CD14-positive monocyte (primary cell): ENCODE measurements at regions of chr11 and their contacts with region 1.

Region 1: GRCh38 chr11:102341844-102342318 is 5.1 kb upstream of the BIRC2 start:
- DNase-seq: peak; percentile 69 to 85 (median 84)
- H3K4me3 ChIP-seq: no peak overlapping the region
- H3K4me3 Mint-ChIP-seq: no peak overlapping the region
- H3K27ac ChIP-seq: no peak overlapping the region
- H3K27ac Mint-ChIP-seq: peak overlapping the region in 3 of 7 donors; percentile 29 to 43 (median 43)
- H3K4me1 ChIP-seq: peaks cover 7 to 10% of the 10 kb centered on the region in 2 donors
- H3K4me1 Mint-ChIP-seq: peaks cover 12% of the 10 kb centered on the region
- H3K27me3 ChIP-seq: no peaks in the 10 kb centered on the region
- H3K27me3 Mint-ChIP-seq: peaks cover 2 to 3% (median 3%) of the 10 kb centered on the region in 3 donors
- CTCF ChIP-seq: peak; percentile 82

Region 2: GRCh38 chr11:102293873-102294601 is 47.8 kb before region 1 on chr11:
- intact Hi-C with region 1: loop called (anchors 5 kb)
- DNase-seq: peak; percentile 64 to 83 (median 74)
- H3K4me3 ChIP-seq: peak overlapping the region in 1 of 3 experiments; percentile 26
- H3K4me3 Mint-ChIP-seq: peak overlapping the region; percentile 17 to 77
- H3K27ac ChIP-seq: no peak overlapping the region
- H3K27ac Mint-ChIP-seq: peak overlapping the region in 6 of 7 donors; percentile 59 to 86 (median 78)
- H3K4me1 ChIP-seq: peaks cover 0 to 6% of the 10 kb centered on the region in 2 donors
- H3K4me1 Mint-ChIP-seq: peaks cover 25% of the 10 kb centered on the region
- H3K27me3 ChIP-seq: no peaks in the 10 kb centered on the region
- H3K27me3 Mint-ChIP-seq: peaks cover 0 to 2% (median 1%) of the 10 kb centered on the region in 3 donors
- CTCF ChIP-seq: peak; percentile 79

Region 3: GRCh38 chr11:102318469-102318868 is 23.4 kb before region 1 on chr11:
- intact Hi-C with region 1: loop called (anchors 2 kb)
- DNase-seq: peak; percentile 49 to 80 (median 60)
- H3K4me3 ChIP-seq: peak overlapping the region; percentile 53 to 73 (median 73)
- H3K4me3 Mint-ChIP-seq: peak overlapping the region; percentile 94 to 97
- H3K27ac ChIP-seq: peak overlapping the region in 1 of 2 donors; percentile 98
- H3K27ac Mint-ChIP-seq: peak overlapping the region; percentile 55 to 98 (median 82)
- H3K4me1 ChIP-seq: peaks cover 25 to 48% of the 10 kb centered on the region in 2 donors
- H3K4me1 Mint-ChIP-seq: peaks cover 61% of the 10 kb centered on the region
- H3K27me3 ChIP-seq: no peaks in the 10 kb centered on the region
- H3K27me3 Mint-ChIP-seq: peaks cover 0 to 2% (median 0%) of the 10 kb centered on the region in 3 donors
- CTCF ChIP-seq: no peak

Region 4: DNA sequence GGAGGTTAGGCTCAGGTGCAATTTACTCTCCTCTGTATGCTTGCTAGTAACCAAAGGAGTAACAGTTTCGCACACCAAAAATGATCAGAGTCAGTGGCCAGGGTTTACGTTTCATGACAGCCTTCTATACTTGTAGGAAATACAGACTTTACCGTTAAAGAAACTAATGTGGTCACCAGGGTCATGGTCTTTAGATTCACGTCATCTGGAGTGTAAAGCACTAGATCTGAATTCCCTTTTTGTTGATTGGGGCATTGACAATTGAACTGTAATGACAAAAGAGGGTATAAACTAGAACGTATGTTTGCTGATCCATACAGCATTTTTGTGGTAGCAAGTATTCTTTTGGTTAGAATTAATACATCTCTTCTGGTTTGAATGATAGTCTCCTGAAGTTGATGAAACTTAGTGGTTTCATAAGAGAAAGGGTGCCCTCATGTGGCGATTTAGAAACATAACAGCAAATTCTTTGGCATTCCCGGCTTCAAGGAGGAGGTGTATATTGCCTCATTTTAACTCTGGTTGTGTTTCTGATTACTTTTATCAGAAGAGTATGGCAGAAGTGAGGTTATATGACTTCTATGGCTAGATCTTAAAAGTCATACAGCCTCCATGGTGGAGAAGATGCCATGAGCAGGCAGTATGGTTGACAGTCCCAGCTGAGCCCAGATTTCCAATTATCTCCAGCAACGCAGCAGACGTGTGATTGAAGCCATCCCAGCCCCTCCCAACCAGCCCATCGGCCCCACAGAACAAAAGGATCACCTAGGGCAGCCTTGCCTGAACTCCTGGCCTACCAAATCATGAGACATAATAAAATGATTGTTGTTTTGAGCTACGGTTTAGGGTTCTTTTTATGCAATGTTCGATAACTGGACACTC is 153.5 kb after region 1 on chr11:
- intact Hi-C with region 1: loop called in 1 of 2 experiments (anchors 5 kb)
- DNase-seq: peak; percentile 57 to 83 (median 78)
- H3K4me3 ChIP-seq: no peak overlapping the region
- H3K4me3 Mint-ChIP-seq: no peak overlapping the region
- H3K27ac ChIP-seq: no peak overlapping the region
- H3K27ac Mint-ChIP-seq: no peak overlapping the region
- H3K4me1 ChIP-seq: no peaks in the 10 kb centered on the region
- H3K4me1 Mint-ChIP-seq: no peaks in the 10 kb centered on the region
- H3K27me3 ChIP-seq: no peaks in the 10 kb centered on the region
- H3K27me3 Mint-ChIP-seq: peaks cover 0 to 3% (median 2%) of the 10 kb centered on the region in 3 donors
- CTCF ChIP-seq: peak; percentile 77